ENCODE measurements at regions of chr11 and their contacts with region 1.

Region 1: GRCh38 chr11:57761301-57762234 is at the start of gene CTNND1:
- DNase-seq: peak; percentile 90
- H3K4me3 ChIP-seq: peak within 1 kb of the TSS; percentile 88
- CTCF ChIP-seq: no peak

Region 2: DNA sequence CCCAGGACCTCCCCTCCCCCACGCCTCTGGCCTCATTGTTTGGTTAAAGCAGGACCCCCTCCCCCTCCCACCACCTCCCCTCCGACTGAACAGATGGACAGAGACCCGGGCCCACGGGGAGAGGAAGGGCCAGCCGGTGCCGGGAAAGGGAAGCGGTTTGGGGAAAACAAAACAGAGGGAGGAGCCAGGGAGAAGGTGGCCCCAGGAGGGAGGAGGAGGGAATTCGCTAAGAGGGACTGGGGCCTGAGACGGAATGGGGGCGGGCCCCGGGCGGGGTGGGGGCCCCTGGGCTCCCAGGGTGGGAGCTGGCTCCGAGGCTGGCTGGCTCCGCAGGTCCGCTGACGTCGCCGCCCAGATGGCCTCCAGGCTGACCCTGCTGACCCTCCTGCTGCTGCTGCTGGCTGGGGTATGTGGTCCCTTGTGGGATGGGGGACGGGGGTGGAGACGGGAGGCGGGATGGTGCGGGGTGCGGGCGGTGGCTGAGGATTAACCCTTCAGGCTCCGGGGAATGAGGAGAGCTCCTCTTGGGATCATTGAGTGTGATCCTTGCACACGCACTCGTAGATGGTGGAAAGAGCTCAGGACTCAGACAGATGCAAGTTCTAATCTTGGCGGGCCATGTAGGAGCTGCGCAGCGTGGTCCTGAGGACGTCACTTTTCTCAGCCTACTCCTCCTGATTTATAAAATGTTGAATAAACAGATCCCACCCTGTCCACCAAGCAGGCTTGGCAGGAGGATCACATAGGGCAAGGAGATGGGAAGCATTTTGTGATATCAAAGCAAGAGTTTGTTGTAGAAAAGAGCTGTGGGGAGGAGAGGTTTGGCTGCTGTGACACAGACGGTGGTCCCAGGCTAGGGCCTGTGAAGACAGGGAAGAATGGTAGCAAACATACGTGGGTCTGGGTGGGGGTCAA is 163.4 kb before region 1 on chr11:
- CTCF ChIA-PET with region 1: no interaction called
- POLR2A ChIA-PET with region 1: no interaction called
- DNase-seq: no peak
- H3K4me3 ChIP-seq: peak overlapping the region; percentile 47
- CTCF ChIP-seq: no peak

Region 3: GRCh38 chr11:57772562-57772961 is 11.0 kb after region 1 on chr11:
- CTCF ChIA-PET with region 1: interaction called, 42 read pairs
- POLR2A ChIA-PET with region 1: interaction called, 5 read pairs
- DNase-seq: no peak
- H3K4me3 ChIP-seq: no peak overlapping the region
- CTCF ChIP-seq: no peak

Region 4: GRCh38 chr11:57778318-57779037 is 16.9 kb after region 1 on chr11:
- CTCF ChIA-PET with region 1: interaction called, 42 read pairs
- POLR2A ChIA-PET with region 1: interaction called, 14 read pairs
- DNase-seq: peak; percentile 94
- H3K4me3 ChIP-seq: peak overlapping the region; percentile 45
- CTCF ChIP-seq: no peak

Region 5: GRCh38 chr11:57842873-57843272 is 81.3 kb after region 1 on chr11:
- CTCF ChIA-PET with region 1: no interaction called
- POLR2A ChIA-PET with region 1: no interaction called
- DNase-seq: no peak
- H3K4me3 ChIP-seq: no peak overlapping the region
- CTCF ChIP-seq: no peak

Measured in AG04449 (cell line).